CD4-positive, alpha-beta memory T cell (primary cell): ENCODE measurements at regions of chr1 and their contacts with region 1.

Region 1: DNA sequence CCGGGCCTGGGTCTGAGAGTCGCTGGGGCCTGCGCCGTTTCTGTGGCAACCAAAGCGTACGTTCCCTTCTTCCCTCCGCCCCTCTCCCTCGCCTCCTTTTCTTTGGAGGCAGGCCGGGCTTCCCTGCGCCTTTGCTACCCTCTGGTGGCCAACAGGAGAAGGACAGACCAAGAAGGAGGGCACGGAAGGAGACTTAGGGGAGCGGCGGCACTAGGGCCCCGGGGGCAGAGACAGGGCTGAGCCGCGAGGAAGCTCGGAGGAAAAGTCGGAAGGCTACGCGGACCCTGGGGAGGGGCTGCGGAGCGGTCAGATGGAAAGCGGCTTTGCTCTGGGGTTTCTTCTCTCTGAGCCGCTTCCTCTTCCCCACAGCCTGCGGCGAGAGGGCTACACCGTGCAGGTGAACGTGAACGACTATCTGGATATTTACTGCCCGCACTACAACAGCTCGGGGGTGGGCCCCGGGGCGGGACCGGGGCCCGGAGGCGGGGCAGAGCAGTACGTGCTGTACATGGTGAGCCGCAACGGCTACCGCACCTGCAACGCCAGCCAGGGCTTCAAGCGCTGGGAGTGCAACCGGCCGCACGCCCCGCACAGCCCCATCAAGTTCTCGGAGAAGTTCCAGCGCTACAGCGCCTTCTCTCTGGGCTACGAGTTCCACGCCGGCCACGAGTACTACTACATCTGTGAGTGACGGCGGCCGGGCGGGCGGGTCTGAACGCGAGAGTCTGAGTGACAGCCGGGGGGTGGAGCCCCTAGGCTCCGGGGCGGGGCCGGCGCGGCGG is 6.3 kb downstream of the EFNA3 start:
- DNase-seq: peak; percentile 92 to 96 (median 92)
- H3K4me3 ChIP-seq: peak overlapping the region; percentile 80 to 95
- H3K4me3 Mint-ChIP-seq: peak overlapping the region; percentile 91 to 98 (median 94)
- H3K27ac ChIP-seq: peak overlapping the region; percentile 54
- H3K27ac Mint-ChIP-seq: peak overlapping the region; percentile 88 to 98 (median 94)
- H3K4me1 ChIP-seq: peaks cover 57% of the 10 kb centered on the region
- H3K4me1 Mint-ChIP-seq: peaks cover 22 to 44% (median 34%) of the 10 kb centered on the region in 4 donors
- H3K27me3 ChIP-seq: peaks cover 34% of the 10 kb centered on the region
- H3K27me3 Mint-ChIP-seq: peaks cover 13 to 30% of the 10 kb centered on the region in 2 donors

Region 2: DNA sequence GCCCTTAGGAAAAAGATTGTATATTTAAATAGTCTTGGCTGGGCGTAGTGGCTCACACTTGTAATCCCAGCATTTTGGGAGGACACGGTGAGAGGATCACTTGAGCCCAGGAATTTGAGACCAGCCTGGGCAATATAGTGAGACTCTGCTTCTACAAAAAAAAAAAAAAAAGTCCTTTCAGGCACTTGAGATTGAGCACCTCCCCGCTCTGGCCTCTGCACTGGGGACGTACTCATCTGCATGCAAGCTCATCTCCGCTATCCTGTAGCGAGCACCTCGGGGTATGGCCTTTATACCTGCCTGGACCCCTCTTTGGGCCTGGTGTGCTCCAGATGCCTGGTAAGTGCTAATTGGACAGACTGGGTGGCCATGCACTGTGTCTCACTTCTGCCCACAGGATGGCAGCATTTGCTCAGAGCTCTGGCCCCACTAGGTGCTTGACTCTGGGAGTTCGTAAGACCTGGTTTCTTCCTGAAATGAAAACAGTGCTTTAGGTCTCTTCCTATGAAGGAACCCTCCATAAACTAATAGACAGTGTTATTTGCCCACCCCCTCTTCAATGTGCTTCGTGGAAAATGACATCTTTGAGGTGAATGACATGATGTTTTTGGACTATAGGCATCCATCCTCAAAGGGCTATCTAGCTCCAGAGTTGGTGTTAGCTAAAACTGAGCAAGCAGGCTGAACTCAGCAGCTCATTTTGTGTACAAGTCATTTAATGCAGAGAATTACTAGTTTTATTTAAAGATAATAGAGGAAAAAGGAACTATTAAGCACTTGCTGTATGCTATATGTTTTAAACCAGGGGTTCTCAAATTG is 415.2 kb before region 1 on chr1:
- CTCF ChIA-PET with region 1: interaction called, 3 read pairs
- POLR2A ChIA-PET with region 1: no interaction called
- intact Hi-C with region 1: loop called (anchors 1 kb)
- DNase-seq: peak; percentile 65 to 73 (median 68)
- H3K4me3 ChIP-seq: no peak overlapping the region
- H3K4me3 Mint-ChIP-seq: no peak overlapping the region
- H3K27ac ChIP-seq: no peak overlapping the region
- H3K27ac Mint-ChIP-seq: no peak overlapping the region
- H3K4me1 ChIP-seq: no peaks in the 10 kb centered on the region
- H3K4me1 Mint-ChIP-seq: no peaks in the 10 kb centered on the region
- H3K27me3 ChIP-seq: no peaks in the 10 kb centered on the region
- H3K27me3 Mint-ChIP-seq: peaks cover 2% of the 10 kb centered on the region in 2 donors

Region 3: GRCh38 chr1:154955718-154956543 is 129.0 kb before region 1 on chr1 and contains the start of gene PBXIP1:
- CTCF ChIA-PET with region 1: interaction called, 11 read pairs
- POLR2A ChIA-PET with region 1: interaction called, 12 read pairs
- intact Hi-C with region 1: loop called (anchors 1 kb)
- DNase-seq: peak; percentile 92 to 94 (median 92)
- H3K4me3 ChIP-seq: peak within 1 kb of the TSS; percentile 80 to 90
- H3K4me3 Mint-ChIP-seq: peak within 1 kb of the TSS; percentile 94 to 100 (median 98)
- H3K27ac ChIP-seq: peak within 1 kb of the TSS; percentile 100
- H3K27ac Mint-ChIP-seq: peak within 1 kb of the TSS; percentile 98 to 100 (median 100)
- H3K4me1 ChIP-seq: peaks cover 75% of the 10 kb centered on the region
- H3K4me1 Mint-ChIP-seq: peaks cover 43 to 87% (median 74%) of the 10 kb centered on the region in 4 donors
- H3K27me3 ChIP-seq: no peaks in the 10 kb centered on the region
- H3K27me3 Mint-ChIP-seq: no peaks in the 10 kb centered on the region
- total RNA-seq, gene PBXIP1: 435 to 438 TPM

Region 4: GRCh38 chr1:155044812-155045690 is 39.9 kb before region 1 on chr1:
- CTCF ChIA-PET with region 1: interaction called, 63 read pairs
- POLR2A ChIA-PET with region 1: interaction called, 21 read pairs
- intact Hi-C with region 1: loop called (anchors 1 kb)
- DNase-seq: peak; percentile 60 to 66 (median 64)
- H3K4me3 ChIP-seq: no peak overlapping the region
- H3K4me3 Mint-ChIP-seq: no peak overlapping the region
- H3K27ac ChIP-seq: no peak overlapping the region
- H3K27ac Mint-ChIP-seq: peak overlapping the region in 1 of 7 donors; percentile 5
- H3K4me1 ChIP-seq: peaks cover 5% of the 10 kb centered on the region
- H3K4me1 Mint-ChIP-seq: peaks cover 7 to 16% (median 11%) of the 10 kb centered on the region in 4 donors
- H3K27me3 ChIP-seq: no peaks in the 10 kb centered on the region
- H3K27me3 Mint-ChIP-seq: no peaks in the 10 kb centered on the region

Region 5: DNA sequence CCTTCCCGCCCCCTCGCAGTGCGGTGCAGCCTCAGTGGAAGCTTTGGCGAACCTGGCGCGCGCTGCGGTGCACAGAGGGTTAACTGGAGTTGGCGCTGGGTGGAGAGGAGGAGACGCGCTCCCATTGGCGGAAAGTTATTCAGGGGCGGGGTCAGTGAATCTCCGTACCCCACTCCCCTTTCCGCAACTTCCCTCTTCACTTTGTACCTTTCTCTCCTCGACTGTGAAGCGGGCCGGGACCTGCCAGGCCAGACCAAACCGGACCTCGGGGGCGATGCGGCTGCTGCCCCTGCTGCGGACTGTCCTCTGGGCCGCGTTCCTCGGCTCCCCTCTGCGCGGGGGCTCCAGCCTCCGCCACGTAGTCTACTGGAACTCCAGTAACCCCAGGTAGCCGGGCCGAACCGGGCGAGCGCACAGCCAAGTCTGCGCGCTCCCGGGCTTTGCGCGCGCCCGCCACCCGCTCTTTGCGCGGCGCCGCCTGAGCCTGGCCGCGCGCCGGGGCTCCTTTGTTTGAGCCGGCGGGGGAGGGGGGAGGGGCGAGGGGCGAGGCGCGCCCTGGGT is 21.3 kb before region 1 on chr1 and contains the start of gene EFNA4:
- CTCF ChIA-PET with region 1: interaction called, 74 read pairs
- POLR2A ChIA-PET with region 1: interaction called, 62 read pairs
- intact Hi-C with region 1: loop called (anchors 1 kb)
- DNase-seq: peak; percentile 83 to 87 (median 86)
- H3K4me3 ChIP-seq: peak within 1 kb of the TSS; percentile 63 to 70
- H3K4me3 Mint-ChIP-seq: peak within 1 kb of the TSS; percentile 91 to 99 (median 94)
- H3K27ac ChIP-seq: peak within 1 kb of the TSS; percentile 51
- H3K27ac Mint-ChIP-seq: peak within 1 kb of the TSS; percentile 81 to 94 (median 85)
- H3K4me1 ChIP-seq: peaks cover 35% of the 10 kb centered on the region
- H3K4me1 Mint-ChIP-seq: peaks cover 23 to 52% (median 32%) of the 10 kb centered on the region in 4 donors
- H3K27me3 ChIP-seq: no peaks in the 10 kb centered on the region
- H3K27me3 Mint-ChIP-seq: no peaks in the 10 kb centered on the region
- total RNA-seq, gene EFNA4: 6.0 to 8.5 TPM

Region 6: DNA sequence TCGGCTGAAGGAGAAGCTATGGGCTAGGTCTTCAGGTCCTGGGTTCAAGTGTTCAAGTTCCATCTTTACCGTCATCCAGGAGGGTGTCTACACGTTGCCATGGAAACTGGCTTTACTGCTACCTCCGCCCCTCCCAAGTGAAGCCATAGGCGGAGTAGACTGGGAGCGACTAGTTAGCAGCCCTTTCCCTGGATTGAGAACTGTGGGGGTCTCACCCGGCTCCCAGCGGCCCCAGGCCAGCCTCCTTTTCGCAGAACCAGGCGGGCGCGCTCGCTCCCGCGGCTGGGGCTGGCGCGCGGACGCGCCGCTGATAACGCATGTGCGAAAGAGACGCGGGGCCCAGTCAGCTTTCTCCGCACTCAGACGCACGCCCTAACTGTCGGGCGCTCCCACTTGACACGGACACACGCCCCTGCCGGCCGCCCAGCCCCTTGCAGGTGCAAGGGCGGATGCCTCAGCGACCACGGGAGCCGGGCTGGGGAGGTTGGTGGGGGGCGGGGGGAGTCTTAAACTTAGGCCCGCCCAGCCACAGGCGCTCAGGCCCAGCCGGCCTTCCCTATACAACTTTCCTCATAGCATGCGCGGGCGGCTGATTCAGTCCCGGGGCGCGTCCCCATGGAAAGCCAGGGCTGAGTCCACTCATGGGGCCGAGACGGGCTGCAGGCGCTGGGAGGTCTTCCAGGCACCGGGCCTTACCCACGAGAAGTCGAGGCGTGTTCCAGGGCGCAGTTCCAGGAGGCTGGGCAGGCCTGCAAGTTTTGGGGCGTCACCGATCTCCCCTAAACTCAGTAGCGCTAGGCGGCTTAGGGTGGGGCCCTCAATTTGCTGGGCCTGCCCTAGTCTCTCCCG is 14.0 kb before region 1 on chr1:
- CTCF ChIA-PET with region 1: interaction called, 74 read pairs
- POLR2A ChIA-PET with region 1: interaction called, 19 read pairs
- intact Hi-C with region 1: loop called (anchors 1 kb)
- DNase-seq: peak; percentile 73 to 87 (median 79)
- H3K4me3 ChIP-seq: peak overlapping the region; percentile 14 to 40
- H3K4me3 Mint-ChIP-seq: peak overlapping the region in 7 of 8 donors; percentile 10 to 68 (median 60)
- H3K27ac ChIP-seq: no peak overlapping the region
- H3K27ac Mint-ChIP-seq: peak overlapping the region in 2 of 7 donors; percentile 13 to 80
- H3K4me1 ChIP-seq: peaks cover 30% of the 10 kb centered on the region
- H3K4me1 Mint-ChIP-seq: peaks cover 14 to 55% (median 32%) of the 10 kb centered on the region in 4 donors
- H3K27me3 ChIP-seq: no peaks in the 10 kb centered on the region
- H3K27me3 Mint-ChIP-seq: no peaks in the 10 kb centered on the region

Region 7: GRCh38 chr1:155135415-155136028 is 50.6 kb after region 1 on chr1 and contains the start of gene SLC50A1:
- CTCF ChIA-PET with region 1: interaction called, 12 read pairs
- POLR2A ChIA-PET with region 1: interaction called, 5 read pairs
- intact Hi-C with region 1: loop called (anchors 5 kb)
- DNase-seq: peak; percentile 90 to 94 (median 91)
- H3K4me3 ChIP-seq: peak within 1 kb of the TSS; percentile 78 to 93
- H3K4me3 Mint-ChIP-seq: peak within 1 kb of the TSS; percentile 94 to 99 (median 98)
- H3K27ac ChIP-seq: peak within 1 kb of the TSS; percentile 97
- H3K27ac Mint-ChIP-seq: peak within 1 kb of the TSS; percentile 97 to 100 (median 99)
- H3K4me1 ChIP-seq: peaks cover 35% of the 10 kb centered on the region
- H3K4me1 Mint-ChIP-seq: peaks cover 23 to 71% (median 46%) of the 10 kb centered on the region in 4 donors
- H3K27me3 ChIP-seq: no peaks in the 10 kb centered on the region
- H3K27me3 Mint-ChIP-seq: no peaks in the 10 kb centered on the region
- total RNA-seq, gene SLC50A1: 20.1 to 22.8 TPM